ENCODE measurements at regions of chr14 and their contacts with region 1.

Region 1: GRCh38 chr14:95495538-95496025 is 20.9 kb downstream of the SYNE3 start:
- DNase-seq: peak; percentile 68
- H3K4me3 ChIP-seq: no peak overlapping the region
- H3K27ac ChIP-seq: peak overlapping the region; percentile 57
- H3K4me1 ChIP-seq: peaks cover 27% of the 10 kb centered on the region
- H3K27me3 ChIP-seq: no peaks in the 10 kb centered on the region
- CTCF ChIP-seq: no peak
- POLR2A ChIP-seq: no peak

Region 2: GRCh38 chr14:95507701-95508103 is 12.1 kb after region 1 on chr14:
- CTCF ChIA-PET with region 1: interaction called, 14 read pairs
- POLR2A ChIA-PET with region 1: no interaction called
- dilution Hi-C with region 1: no loop called
- intact Hi-C with region 1: loop called (anchors 1 kb)
- DNase-seq: peak; percentile 83
- H3K4me3 ChIP-seq: no peak overlapping the region
- H3K27ac ChIP-seq: peak overlapping the region; percentile 88
- H3K4me1 ChIP-seq: peaks cover 28% of the 10 kb centered on the region
- H3K27me3 ChIP-seq: no peaks in the 10 kb centered on the region
- CTCF ChIP-seq: no peak
- POLR2A ChIP-seq: no peak